GM10248 (cell line): ENCODE measurements at regions of chr13 and their contacts with region 1.

Region 1: GRCh38 chr13:30802953-30803478 is 67.7 kb downstream of the ALOX5AP start:
- DNase-seq: peak; percentile 83
- CTCF ChIP-seq: peak; percentile 98

Region 2: GRCh38 chr13:30792285-30793000 is 10.6 kb before region 1 on chr13:
- CTCF ChIA-PET with region 1: interaction called, 29 read pairs
- POLR2A ChIA-PET with region 1: no interaction called
- DNase-seq: no peak
- CTCF ChIP-seq: no peak

Region 3: GRCh38 chr13:30843548-30843947 is 40.5 kb after region 1 on chr13:
- CTCF ChIA-PET with region 1: no interaction called
- POLR2A ChIA-PET with region 1: no interaction called
- DNase-seq: no peak
- CTCF ChIP-seq: no peak